ENCODE measurements at regions of chr10 and their contacts with region 1.

Region 1: GRCh38 chr10:122565728-122566206 is 5.2 kb downstream of the DMBT1 start:
- DNase-seq: peak; percentile 89
- H3K4me3 ChIP-seq: no peak overlapping the region
- H3K27ac ChIP-seq: no peak overlapping the region
- H3K4me1 ChIP-seq: no peaks in the 10 kb centered on the region
- H3K27me3 ChIP-seq: peaks cover 19% of the 10 kb centered on the region in 2 experiments
- CTCF ChIP-seq: peak; percentile 71 to 76
- POLR2A ChIP-seq: no peak

Region 2: DNA sequence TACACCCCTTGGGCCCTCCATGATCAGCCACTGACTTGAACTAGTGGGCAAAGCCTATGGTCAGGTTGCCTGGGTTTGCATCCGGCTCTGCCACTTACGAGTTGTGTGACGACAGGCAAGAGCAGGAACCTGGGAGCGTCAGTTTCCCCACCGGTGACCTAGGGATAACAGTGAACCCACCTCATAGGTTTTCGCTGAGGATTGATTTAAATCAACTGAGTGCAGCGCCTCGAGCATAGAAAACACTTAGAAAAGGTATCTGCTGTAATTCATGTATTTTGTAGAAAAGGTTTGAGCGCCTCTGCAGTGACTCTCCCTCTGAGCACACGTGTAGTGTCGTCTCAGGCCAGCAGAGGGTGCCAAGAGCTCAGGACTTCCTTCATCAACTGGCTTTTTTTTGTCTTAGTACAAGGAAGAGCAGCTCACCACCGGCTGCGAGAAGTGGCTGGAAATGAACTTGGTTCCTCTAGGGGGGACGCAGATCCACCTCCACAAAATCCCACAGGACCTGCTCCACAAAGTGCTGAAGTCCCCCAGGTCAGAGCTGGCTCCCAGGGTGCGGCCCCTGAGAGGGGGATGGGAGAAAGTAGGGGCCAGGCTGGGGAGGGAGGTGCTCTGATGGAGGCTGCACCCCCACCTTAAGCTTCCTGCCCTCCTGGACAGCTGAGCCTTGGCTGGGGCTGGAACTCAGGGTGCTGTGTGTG is 267.0 kb before region 1 on chr10:
- CTCF ChIA-PET with region 1: interaction called, 104 read pairs
- POLR2A ChIA-PET with region 1: no interaction called
- dilution Hi-C with region 1: no loop called
- intact Hi-C with region 1: loop called (anchors 1 kb)
- DNase-seq: peak; percentile 85
- H3K4me3 ChIP-seq: no peak overlapping the region
- H3K27ac ChIP-seq: no peak overlapping the region
- H3K4me1 ChIP-seq: no peaks in the 10 kb centered on the region
- H3K27me3 ChIP-seq: no peaks in the 10 kb centered on the region
- CTCF ChIP-seq: peak; percentile 81 to 96
- POLR2A ChIP-seq: no peak

Region 3: DNA sequence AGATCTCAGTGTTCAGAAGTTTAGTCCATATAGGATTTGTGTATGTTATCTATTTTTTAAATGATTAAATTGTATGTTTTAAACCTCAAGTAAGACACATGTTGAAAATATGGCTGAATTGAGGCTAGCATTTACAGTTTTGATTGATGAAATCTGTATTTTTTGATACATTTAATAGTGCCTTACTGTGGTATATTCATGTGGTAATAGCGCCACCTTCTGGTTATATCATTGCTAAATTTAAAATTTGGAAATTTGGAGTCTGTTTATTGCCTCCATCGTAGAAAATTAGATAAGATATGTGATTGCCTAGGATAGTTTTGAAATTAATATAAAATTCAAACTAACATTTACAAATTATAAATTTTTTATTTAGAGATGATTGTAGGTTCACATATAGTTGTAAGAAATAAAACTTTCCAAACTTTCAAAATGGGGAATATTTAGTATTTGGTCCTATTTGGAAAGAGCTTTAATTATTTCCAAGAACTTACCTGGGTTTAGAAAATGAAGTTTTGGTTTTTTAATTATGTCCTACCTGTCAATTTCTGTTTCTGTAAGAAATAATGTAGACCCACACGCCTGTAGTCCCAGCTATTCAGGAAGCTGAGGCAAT is 130.4 kb before region 1 on chr10:
- CTCF ChIA-PET with region 1: interaction called, 68 read pairs
- POLR2A ChIA-PET with region 1: no interaction called
- dilution Hi-C with region 1: no loop called
- intact Hi-C with region 1: loop called (anchors 1 kb)
- DNase-seq: peak; percentile 64
- H3K4me3 ChIP-seq: no peak overlapping the region
- H3K27ac ChIP-seq: no peak overlapping the region
- H3K4me1 ChIP-seq: no peaks in the 10 kb centered on the region
- H3K27me3 ChIP-seq: no peaks in the 10 kb centered on the region
- CTCF ChIP-seq: peak; percentile 8 to 23
- POLR2A ChIP-seq: no peak

Region 4: DNA sequence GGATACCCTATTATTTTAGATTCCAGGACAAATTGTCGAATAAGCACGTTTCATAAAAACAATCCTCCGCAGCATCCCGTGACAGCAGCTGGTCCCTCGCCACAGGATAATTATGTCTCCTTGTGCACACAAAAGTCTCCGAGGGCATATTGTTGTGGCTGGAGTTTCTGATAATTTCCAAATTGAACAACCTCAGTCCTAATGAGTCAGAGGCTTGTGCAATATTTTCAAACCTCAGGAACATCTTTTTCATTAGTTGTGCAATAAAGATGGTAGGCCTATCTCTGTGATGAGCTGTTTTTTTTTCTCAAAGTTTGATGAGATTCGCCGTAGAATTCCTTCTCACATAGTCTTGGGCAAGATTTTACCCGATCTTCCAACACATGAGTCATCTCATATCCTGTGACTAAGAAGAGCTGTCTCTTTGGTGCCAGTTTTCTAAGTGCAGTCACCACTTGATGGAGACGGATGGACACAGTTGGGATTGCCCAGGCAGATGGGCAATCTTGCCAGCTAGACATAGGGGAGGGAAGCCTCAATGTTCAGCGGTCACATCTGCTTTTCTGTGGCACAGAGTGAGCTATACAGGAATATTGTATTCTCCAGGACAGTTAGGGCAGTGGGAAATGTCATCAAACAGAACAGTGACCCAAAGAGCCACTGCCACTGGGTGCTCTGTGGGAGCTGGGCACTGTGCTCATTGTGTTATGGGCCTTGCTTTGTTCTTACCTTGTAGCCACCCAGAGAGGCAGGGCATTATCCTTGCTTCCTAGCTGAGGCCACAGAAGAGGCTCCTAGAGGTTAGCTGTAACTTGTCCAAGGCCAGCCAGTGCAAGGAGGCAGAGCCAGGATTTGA is 96.6 kb before region 1 on chr10:
- CTCF ChIA-PET with region 1: interaction called, 19 read pairs
- POLR2A ChIA-PET with region 1: no interaction called
- dilution Hi-C with region 1: no loop called
- intact Hi-C with region 1: loop called (anchors 1 kb)
- DNase-seq: peak; percentile 64
- H3K4me3 ChIP-seq: no peak overlapping the region
- H3K27ac ChIP-seq: peak overlapping the region; percentile 32
- H3K4me1 ChIP-seq: peaks cover 27% of the 10 kb centered on the region
- H3K27me3 ChIP-seq: no peaks in the 10 kb centered on the region
- CTCF ChIP-seq: no peak
- POLR2A ChIP-seq: no peak

Region 5: GRCh38 chr10:122510326-122510725 is 55.4 kb before region 1 on chr10:
- CTCF ChIA-PET with region 1: interaction called, 36 read pairs
- POLR2A ChIA-PET with region 1: no interaction called
- dilution Hi-C with region 1: no loop called
- intact Hi-C with region 1: no loop called
- DNase-seq: no peak
- H3K4me3 ChIP-seq: no peak overlapping the region
- H3K27ac ChIP-seq: no peak overlapping the region
- H3K4me1 ChIP-seq: no peaks in the 10 kb centered on the region
- H3K27me3 ChIP-seq: no peaks in the 10 kb centered on the region
- CTCF ChIP-seq: no peak
- POLR2A ChIP-seq: no peak

Region 6: DNA sequence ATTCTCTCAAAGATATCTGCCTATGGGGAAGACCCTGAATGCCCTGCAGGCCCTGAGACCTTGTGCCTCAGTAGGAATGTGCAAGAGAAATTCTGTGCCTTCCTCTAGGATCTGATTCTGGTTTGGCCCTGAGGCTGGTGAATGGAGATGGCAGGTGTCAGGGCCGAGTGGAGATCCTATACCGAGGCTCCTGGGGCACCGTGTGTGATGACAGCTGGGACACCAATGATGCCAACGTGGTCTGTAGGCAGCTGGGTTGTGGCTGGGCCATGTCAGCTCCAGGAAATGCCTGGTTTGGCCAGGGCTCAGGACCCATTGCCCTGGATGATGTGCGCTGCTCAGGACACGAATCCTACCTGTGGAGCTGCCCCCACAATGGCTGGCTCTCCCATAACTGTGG is 10.5 kb after region 1 on chr10:
- CTCF ChIA-PET with region 1: interaction called, 11 read pairs
- POLR2A ChIA-PET with region 1: no interaction called
- dilution Hi-C with region 1: no loop called
- intact Hi-C with region 1: no loop called
- DNase-seq: no peak
- H3K4me3 ChIP-seq: no peak overlapping the region
- H3K27ac ChIP-seq: no peak overlapping the region
- H3K4me1 ChIP-seq: no peaks in the 10 kb centered on the region
- H3K27me3 ChIP-seq: no peaks in the 10 kb centered on the region
- CTCF ChIP-seq: no peak
- POLR2A ChIP-seq: no peak

Region 7: DNA sequence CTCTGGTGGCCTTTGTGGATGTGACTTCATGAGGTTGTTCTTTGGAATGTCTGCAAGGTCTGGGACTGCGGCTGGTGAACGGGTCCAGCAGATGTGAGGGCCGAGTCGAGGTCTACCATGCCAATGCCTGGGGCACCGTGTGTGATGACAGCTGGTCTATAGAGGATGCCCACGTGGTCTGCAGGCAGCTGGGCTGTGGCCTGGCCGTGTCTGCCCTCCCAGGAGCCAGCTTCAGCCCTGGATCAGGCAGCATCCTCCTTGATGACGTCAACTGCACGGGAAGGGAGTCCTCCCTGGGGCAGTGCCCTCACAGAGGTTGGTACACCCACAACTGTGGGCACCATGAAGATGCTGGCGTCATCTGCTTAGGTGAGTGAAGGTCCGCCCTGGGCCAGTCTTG is 233.0 kb after region 1 on chr10:
- CTCF ChIA-PET with region 1: no interaction called
- POLR2A ChIA-PET with region 1: no interaction called
- dilution Hi-C with region 1: no loop called
- intact Hi-C with region 1: no loop called
- DNase-seq: no peak
- H3K4me3 ChIP-seq: no peak overlapping the region
- H3K27ac ChIP-seq: no peak overlapping the region
- H3K4me1 ChIP-seq: no peaks in the 10 kb centered on the region
- H3K27me3 ChIP-seq: no peaks in the 10 kb centered on the region
- CTCF ChIP-seq: no peak
- POLR2A ChIP-seq: no peak

Measured in endothelial cell of umbilical vein (primary cell).